ENCODE measurements at regions of chr3 and their contacts with region 1.

Region 1: DNA sequence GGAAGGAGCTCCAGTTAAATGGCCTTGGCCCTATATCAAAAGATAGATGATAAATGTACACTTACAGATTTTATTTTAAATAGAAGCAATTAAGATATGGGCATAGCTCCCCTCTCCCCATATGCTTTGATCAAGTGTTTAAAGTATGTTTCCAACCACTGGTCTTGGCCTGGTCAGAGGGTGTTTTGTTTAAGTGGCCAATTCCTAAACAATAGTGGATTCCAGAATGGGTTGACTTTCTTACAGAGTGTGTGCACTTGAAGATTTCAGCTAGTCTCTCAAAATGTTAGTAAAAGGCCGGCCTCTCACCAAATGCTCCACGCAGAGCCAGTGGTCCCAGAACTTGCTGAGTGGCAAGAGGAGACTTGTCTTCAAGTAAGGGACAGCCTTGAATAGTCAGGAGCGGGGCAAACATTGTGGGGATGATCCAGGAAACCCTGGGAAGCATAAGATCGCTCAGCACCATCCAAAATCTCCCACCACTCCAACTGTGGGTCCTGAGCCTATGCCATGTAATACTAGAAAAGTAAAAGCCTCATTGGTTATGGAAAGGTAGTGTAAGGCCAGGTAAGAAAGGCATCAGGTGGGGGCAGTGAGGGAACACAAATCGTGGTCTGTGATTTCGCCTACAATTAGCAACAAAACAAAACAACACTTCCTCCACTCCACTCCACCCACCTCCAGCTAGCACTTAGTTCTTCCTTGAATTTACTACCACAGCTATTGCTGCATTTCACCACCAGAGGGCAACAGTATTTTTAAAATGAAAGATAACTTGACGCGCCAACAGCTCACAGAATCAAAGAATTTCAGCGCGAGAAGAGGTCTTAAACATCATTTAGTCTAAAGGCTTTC is 4.8 kb downstream of the RARRES1 start:
- DNase-seq: peak; percentile 77
- CTCF ChIP-seq: peak; percentile 89

Region 2: GRCh38 chr3:158683216-158683962 is 44.0 kb before region 1 on chr3:
- CTCF ChIA-PET with region 1: interaction called, 11 read pairs
- POLR2A ChIA-PET with region 1: no interaction called
- DNase-seq: no peak
- CTCF ChIP-seq: no peak

Region 3: GRCh38 chr3:158713094-158713499 is 14.3 kb before region 1 on chr3:
- CTCF ChIA-PET with region 1: interaction called, 46 read pairs
- POLR2A ChIA-PET with region 1: no interaction called
- DNase-seq: no peak
- CTCF ChIP-seq: no peak

Region 4: DNA sequence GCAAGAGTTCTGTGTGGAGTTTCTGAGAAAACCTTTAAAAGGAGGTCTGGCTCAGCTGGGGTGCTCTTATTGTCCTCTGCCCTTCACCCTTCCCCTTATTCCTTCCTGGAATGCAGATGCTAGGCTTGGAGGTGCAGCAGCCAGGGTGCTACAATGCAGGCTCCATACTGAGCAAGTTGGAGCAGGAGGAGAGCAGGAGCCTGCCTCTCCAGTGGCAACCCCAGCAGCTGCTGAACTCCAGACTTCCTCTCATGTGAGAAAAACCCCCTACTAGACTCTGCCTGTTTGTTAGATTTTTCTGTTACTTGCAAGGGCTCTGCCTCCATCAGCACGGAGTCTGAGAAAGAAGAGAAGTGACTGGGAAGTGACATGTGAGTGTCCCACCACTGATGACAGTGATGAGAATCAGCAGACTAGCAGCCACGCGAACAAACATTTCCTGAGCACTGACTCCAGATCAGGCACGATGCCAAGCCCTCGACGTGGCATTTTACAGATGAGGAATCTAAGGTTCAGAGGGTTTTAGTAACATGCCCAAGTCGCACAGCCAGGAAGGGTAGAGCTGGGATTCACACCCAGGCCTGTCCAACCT is 20.9 kb after region 1 on chr3:
- CTCF ChIA-PET with region 1: interaction called, 40 read pairs
- POLR2A ChIA-PET with region 1: no interaction called
- DNase-seq: no peak
- CTCF ChIP-seq: no peak

Region 5: GRCh38 chr3:158777161-158777873 is 49.9 kb after region 1 on chr3:
- CTCF ChIA-PET with region 1: interaction called, 14 read pairs
- POLR2A ChIA-PET with region 1: no interaction called
- DNase-seq: no peak
- CTCF ChIP-seq: no peak

Region 6: GRCh38 chr3:158801696-158802408 is 74.4 kb after region 1 on chr3 and contains the start of gene MFSD1:
- CTCF ChIA-PET with region 1: interaction called, 19 read pairs
- POLR2A ChIA-PET with region 1: no interaction called
- DNase-seq: peak; percentile 93
- CTCF ChIP-seq: no peak

Region 7: DNA sequence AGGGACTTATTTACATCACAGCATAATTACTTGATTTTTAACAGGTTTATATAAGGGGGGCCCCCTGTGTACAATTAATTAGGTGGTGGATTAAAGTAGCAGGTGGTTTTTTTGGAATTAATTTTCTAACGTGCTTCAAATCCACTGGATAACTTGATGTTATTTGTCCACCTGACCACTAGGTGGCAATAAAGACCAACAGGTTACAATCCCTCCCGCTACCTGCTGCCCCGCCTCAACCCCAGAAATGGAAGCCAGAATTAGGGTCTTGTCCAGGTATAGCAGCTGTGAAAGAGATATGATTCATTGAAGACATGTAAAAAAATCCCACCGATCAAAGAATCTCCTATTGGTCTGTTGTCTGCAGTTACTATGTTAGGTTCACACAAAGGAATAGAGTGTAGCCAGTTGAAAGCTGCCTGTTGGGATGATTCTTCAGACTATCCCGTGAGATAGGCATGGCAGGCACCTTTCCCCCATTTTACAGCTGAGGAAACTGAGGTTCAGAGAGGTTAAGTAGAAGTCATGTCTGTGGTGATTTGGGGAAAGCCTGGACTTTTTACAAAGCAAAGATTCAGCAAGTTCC is 118.4 kb after region 1 on chr3:
- CTCF ChIA-PET with region 1: no interaction called
- POLR2A ChIA-PET with region 1: no interaction called
- DNase-seq: peak; percentile 62
- CTCF ChIP-seq: peak; percentile 70